ENCODE measurements at regions of chr3 and their contacts with region 1.

Region 1: GRCh38 chr3:138915503-138916498 is 31.1 kb downstream of the FOXL2 start:
- DNase-seq: peak; percentile 75
- H3K4me3 ChIP-seq: peak overlapping the region; percentile 90
- H3K27ac ChIP-seq: peak overlapping the region; percentile 95
- H3K27me3 ChIP-seq: no peaks in the 10 kb centered on the region
- CTCF ChIP-seq: peak; percentile 76

Region 2: GRCh38 chr3:138417559-138417982 is 498.2 kb before region 1 on chr3:
- CTCF ChIA-PET with region 1: interaction called, 41 read pairs
- POLR2A ChIA-PET with region 1: no interaction called
- DNase-seq: peak; percentile 67
- H3K4me3 ChIP-seq: no peak overlapping the region
- H3K27ac ChIP-seq: no peak overlapping the region
- H3K27me3 ChIP-seq: peaks cover 7% of the 10 kb centered on the region
- CTCF ChIP-seq: peak; percentile 98

Region 3: GRCh38 chr3:138620431-138620830 is 295.4 kb before region 1 on chr3:
- CTCF ChIA-PET with region 1: interaction called, 38 read pairs
- POLR2A ChIA-PET with region 1: interaction called, 4 read pairs
- DNase-seq: no peak
- H3K4me3 ChIP-seq: no peak overlapping the region
- H3K27ac ChIP-seq: no peak overlapping the region
- H3K27me3 ChIP-seq: no peaks in the 10 kb centered on the region
- CTCF ChIP-seq: no peak

Region 4: GRCh38 chr3:138712086-138712485 is 203.7 kb before region 1 on chr3:
- CTCF ChIA-PET with region 1: interaction called, 794 read pairs
- POLR2A ChIA-PET with region 1: no interaction called
- DNase-seq: no peak
- H3K4me3 ChIP-seq: no peak overlapping the region
- H3K27ac ChIP-seq: no peak overlapping the region
- H3K27me3 ChIP-seq: no peaks in the 10 kb centered on the region
- CTCF ChIP-seq: no peak

Region 5: GRCh38 chr3:138768125-138768524 is 147.7 kb before region 1 on chr3:
- CTCF ChIA-PET with region 1: interaction called, 19 read pairs
- POLR2A ChIA-PET with region 1: no interaction called
- DNase-seq: no peak
- H3K4me3 ChIP-seq: no peak overlapping the region
- H3K27ac ChIP-seq: no peak overlapping the region
- H3K27me3 ChIP-seq: no peaks in the 10 kb centered on the region
- CTCF ChIP-seq: no peak

Region 6: DNA sequence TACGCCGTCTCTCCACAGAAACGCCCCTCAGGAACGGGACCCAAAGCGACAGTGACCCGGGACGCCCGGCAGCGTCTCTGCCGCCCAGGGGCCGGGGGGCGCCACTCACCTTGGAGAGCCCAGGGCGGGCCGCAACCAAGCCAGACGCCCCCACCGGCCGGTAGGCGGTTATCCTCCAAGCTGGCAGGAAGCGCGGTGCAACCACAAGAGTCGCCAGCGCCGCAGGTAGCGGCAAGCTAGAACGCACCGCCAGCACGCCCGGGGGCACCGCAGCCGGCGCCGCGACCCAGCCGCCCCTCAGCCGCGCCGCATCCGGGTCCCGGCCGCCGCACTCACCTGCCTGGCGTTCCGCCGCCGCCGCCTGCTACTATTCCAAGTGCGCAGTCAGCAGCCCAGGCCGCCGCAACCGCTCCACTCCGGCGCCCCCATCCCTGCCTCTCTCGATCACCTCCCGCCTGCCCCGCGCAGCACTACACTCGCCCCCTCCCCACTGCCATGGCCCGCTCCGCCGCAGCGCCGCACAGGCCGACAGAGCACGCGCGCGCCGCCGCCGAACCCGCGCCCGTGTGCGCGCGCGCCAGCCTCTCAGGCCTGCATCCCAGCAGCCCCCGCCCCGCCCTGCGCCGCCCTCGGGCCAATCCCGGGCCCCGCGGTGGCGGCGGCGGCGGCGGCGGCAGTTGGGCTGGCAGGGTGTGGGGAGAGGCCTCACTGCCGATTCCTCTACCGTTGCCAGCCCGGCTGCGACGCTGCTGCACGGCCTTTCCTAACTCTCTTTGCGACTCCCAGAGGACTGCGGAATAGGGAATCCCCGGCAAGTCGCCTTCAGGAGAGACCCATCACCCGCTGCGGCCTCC is 81.2 kb before region 1 on chr3 and contains the start of gene PIK3CB:
- CTCF ChIA-PET with region 1: interaction called, 13 read pairs
- POLR2A ChIA-PET with region 1: no interaction called
- DNase-seq: no peak
- H3K4me3 ChIP-seq: peak within 1 kb of the TSS; percentile 84
- H3K27ac ChIP-seq: peak within 1 kb of the TSS; percentile 93
- H3K27me3 ChIP-seq: no peaks in the 10 kb centered on the region
- CTCF ChIP-seq: 0 out of 2 replicates have a peak, but pooled peaks have one; percentile 11
- polyA plus RNA-seq, gene PIK3CB: 11.5 and 13.8 TPM in 2 replicates

Region 7: DNA sequence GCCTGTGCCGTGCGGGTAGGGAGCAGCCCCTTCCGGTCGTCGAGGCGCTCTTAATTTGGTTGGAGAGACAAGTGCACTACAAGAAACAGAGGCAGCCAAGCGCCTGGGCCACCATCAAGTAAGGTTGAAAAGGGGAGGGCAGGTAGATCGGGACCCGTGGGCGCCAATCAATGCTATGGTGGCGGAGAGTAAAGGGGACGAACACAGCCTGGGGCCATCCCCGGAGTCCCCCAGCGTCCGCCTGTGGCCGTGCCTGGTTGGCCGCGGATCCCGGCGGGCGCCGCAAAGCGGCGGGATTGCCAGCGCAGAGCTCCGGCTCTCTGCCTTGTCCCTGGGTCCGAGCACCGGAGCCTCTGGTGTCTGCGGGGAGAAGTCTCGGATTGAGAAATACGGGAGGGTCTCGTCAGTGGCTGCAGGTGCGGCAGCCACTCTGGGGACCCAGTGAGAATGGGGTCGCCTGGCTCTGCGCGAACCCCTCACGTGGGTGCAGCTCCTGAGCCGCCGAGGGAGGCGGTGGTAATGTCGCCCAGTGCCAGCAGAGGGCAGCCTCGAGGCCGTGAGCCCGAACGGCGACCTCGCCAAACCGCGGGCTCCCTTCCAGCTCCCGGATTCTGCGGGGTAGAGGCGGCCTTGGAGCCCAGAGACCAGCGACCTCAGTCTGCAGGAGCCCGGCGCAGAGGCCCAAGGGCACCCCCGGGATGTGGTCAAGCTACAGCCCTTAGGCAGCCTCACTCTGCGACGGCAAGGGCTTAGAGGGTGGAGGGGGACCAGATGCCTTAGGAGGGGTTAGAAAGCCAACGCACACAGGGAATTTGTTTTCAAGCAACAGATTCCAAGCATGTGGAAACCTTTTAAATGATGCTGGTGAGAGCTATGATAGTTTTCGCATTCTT is 20.3 kb after region 1 on chr3:
- CTCF ChIA-PET with region 1: interaction called, 82 read pairs
- POLR2A ChIA-PET with region 1: no interaction called
- DNase-seq: no peak
- H3K4me3 ChIP-seq: peak overlapping the region; percentile 55
- H3K27ac ChIP-seq: no peak overlapping the region
- H3K27me3 ChIP-seq: peaks cover 76% of the 10 kb centered on the region
- CTCF ChIP-seq: peak; percentile 77

Region 8: DNA sequence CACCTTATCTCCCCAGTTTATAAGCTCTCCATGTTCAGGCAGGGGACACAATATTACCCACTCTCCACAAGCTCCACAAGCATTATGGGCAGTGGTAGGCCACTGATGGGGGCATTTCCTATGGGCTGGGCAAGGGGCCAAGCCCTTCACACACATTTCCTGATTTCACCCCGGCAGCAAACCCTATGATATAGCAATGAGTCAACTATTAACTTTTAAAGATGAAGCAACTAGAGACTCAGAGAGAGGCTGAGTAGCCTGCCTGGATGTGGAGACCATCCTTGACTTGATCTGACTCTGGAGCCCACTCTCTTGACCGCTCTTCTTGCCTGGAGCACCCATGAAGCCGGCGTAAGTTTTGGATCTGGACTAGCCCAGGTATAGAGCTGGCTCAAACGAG is 58.7 kb after region 1 on chr3:
- CTCF ChIA-PET with region 1: no interaction called
- POLR2A ChIA-PET with region 1: no interaction called
- DNase-seq: no peak
- H3K4me3 ChIP-seq: no peak overlapping the region
- H3K27ac ChIP-seq: no peak overlapping the region
- H3K27me3 ChIP-seq: peaks cover 2% of the 10 kb centered on the region
- CTCF ChIP-seq: no peak

Region 9: DNA sequence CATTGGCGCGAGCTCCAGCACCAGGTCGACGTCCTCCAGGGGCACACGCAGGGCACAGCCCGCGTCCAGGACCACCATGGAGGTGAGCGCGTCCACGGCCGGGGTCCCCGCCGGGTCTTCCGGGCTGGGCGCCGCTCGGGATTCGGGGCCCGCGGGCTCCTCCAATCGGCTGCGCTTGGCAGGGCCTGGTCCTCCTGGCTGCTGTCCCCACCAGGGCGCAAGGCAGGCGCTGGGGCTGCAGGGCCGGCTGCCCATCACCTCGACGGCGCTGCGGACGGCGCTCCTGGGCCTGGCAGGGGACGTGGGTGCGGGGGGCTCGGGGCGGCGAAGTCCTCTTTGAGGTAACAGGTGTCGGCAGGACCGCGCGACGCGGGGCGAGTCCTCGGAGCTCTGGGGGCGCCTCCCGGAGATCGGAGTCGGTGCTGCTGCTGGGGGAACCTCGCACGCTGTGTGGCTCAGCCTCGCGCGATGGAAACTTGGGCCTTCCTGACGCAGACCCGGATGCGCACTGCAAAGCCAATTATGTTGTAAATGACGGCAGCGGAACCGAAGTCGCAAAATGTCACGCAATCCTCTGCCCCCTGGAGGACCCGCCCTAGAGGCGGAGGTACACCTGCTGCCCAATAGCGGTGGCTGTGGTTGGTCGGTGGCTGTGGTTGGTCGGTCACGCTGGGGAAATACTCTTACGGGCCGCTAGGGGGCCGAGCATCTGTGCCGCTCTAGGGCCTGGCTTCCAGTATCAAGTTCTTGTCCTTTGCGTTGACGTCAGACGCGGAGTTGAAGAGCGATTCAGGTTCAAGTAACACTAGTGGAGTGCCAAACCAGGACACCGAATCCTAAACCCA is 128.8 kb after region 1 on chr3 and contains the start of gene PRR23C:
- CTCF ChIA-PET with region 1: no interaction called
- POLR2A ChIA-PET with region 1: no interaction called
- DNase-seq: no peak
- H3K4me3 ChIP-seq: no peak within 1 kb of the TSS
- H3K27ac ChIP-seq: no peak within 1 kb of the TSS
- H3K27me3 ChIP-seq: no peaks in the 10 kb centered on the region
- CTCF ChIP-seq: no peak
- polyA plus RNA-seq, gene PRR23C: not detected in 2 replicates

Region 10: GRCh38 chr3:139251529-139251928 is 335.7 kb after region 1 on chr3:
- CTCF ChIA-PET with region 1: no interaction called
- POLR2A ChIA-PET with region 1: no interaction called
- DNase-seq: no peak
- H3K4me3 ChIP-seq: no peak overlapping the region
- H3K27ac ChIP-seq: no peak overlapping the region
- H3K27me3 ChIP-seq: peaks cover 11% of the 10 kb centered on the region
- CTCF ChIP-seq: no peak